Activated naive CD4-positive, alpha-beta T cell treated with anti-CD3 and anti-CD28 coated beads for 36 hours (primary cell): ENCODE measurements at regions of chr17 and their contacts with region 1.

Region 1: DNA sequence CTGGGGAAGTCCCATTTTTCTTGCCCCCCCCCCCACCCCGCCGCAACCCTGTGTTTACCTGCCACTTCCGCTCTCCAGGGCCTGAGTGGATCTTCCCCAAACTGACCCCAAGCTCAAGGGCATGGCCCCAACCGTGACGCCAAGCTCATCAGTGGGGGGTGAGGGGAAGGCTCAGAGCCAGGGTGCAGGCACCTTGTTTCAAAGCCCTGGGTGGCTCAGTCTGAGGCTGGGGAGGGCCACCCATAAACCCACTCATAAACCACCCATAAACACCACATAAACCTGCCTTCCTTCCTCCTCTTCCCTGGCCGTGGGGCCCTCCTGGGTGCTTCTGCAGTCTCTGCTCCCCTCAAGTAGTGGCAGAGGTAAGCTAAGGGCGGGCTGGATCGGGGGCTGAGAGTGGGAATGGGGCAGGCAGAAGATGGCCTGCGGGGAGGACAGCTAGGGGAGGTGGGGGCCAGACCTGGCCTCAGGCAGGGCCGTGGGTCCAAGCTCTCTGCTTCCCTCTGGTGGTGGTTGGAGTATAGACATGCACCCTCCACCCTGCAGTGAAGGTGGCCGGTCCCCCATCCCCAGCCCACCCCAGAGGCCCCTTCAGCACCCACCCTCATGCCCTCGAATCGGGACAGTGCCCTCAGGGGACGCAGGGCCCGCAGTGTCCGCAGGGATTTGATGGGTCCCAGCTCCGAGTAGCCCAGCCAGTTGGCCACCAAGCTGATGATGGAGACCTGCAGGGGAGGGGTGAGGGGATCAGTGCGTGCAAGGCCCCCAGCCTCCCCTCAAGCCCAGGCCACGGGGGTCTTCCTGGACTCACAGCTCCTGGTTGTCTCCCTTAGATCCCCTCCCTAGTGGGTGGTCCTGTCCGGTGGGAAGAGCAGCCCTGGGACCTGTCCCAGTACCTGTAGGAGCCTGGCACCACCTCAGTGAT is 14.6 kb upstream of the CD79B start:
- DNase-seq: peak; percentile 74
- H3K4me3 Mint-ChIP-seq: peak overlapping the region; percentile 28
- H3K27ac Mint-ChIP-seq: no peak overlapping the region
- H3K4me1 Mint-ChIP-seq: peaks cover 8% of the 10 kb centered on the region
- H3K27me3 Mint-ChIP-seq: no peaks in the 10 kb centered on the region

Region 2: DNA sequence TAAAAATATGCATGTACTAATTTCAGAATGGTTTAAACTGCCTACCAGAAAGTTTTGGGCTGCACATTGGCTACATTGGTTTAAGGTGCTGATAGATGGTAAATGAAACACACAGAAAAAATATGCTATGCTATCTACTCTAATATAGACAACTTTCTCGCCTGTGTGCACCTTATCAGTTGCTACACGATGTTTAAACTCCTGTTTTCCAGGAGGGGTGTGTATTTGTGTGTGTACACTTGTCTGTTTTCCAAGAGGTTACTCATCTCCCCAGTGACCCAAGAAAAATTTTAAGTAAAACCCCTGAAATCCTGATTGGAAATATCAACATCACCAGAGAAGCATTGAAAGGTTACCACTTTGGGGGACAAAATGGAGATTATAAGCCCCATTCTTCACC is 141.1 kb before region 1 on chr17:
- CTCF ChIA-PET with region 1: no interaction called
- intact Hi-C with region 1: no loop called
- DNase-seq: no peak
- H3K4me3 Mint-ChIP-seq: no peak overlapping the region
- H3K27ac Mint-ChIP-seq: peak overlapping the region; percentile 2
- H3K4me1 Mint-ChIP-seq: peaks cover 7% of the 10 kb centered on the region
- H3K27me3 Mint-ChIP-seq: no peaks in the 10 kb centered on the region

Region 3: DNA sequence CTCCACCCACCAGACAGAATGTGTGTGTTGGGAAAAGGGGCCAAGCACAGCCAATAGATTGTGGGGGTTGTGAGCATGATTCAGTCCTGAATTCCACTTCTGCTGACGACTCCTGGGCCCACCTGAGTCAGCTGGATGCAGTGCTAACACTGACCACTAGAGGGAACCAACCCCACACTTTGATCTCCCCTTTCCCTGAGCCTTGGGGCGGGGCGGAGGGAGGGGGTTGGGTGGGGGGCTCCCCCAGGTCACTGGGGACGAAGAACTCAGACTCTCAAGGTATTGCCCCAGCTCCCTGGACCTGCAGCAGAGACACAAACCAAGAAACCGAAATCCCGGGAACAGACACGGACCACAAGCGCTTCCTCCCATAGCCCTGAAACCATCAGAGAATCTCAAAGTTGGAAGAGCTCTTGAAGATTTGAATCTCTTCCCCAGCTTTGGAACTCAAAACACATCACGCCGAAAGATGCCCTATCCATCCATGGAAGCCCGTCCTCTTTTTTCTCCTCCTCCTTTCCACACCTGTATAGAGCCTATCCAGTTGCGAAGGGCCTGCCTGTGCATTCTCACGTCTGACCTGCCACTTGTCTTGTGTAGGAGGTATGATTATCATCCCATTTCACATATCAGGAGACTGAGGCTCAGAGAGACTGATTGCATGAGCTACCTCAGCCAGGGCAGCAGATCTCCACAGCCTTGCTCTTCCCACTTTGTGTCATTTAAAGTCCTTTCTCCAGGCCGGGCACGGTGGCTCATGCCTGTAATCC is 34.9 kb before region 1 on chr17:
- CTCF ChIA-PET with region 1: interaction called, 42 read pairs
- intact Hi-C with region 1: no loop called
- DNase-seq: peak; percentile 74
- H3K4me3 Mint-ChIP-seq: no peak overlapping the region
- H3K27ac Mint-ChIP-seq: no peak overlapping the region
- H3K4me1 Mint-ChIP-seq: no peaks in the 10 kb centered on the region
- H3K27me3 Mint-ChIP-seq: no peaks in the 10 kb centered on the region

Region 4: DNA sequence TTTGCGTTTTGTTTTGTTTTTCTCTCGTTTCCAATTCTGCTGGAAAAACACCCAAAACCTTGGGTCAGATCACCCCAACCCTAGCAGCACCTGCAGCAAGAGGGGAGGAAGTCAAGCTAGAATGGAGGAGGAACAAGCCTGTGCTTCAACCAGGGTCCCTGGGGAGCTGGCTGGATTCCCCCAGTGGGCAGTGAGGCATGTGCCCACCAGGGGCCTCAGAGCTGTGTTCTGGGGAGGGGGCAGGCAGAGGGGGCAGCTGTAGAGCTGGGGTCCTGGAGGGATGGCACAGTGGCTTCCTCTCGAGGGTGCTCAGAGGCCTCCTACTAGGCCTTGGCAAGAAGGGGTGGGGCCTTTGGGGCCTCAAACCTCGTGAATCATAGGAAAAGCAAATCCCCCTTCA is 21.1 kb before region 1 on chr17:
- CTCF ChIA-PET with region 1: interaction called, 76 read pairs
- intact Hi-C with region 1: no loop called
- DNase-seq: no peak
- H3K4me3 Mint-ChIP-seq: no peak overlapping the region
- H3K27ac Mint-ChIP-seq: no peak overlapping the region
- H3K4me1 Mint-ChIP-seq: peaks cover under 1% of the 10 kb centered on the region
- H3K27me3 Mint-ChIP-seq: no peaks in the 10 kb centered on the region

Region 5: GRCh38 chr17:63961355-63962212 is 14.9 kb after region 1 on chr17:
- CTCF ChIA-PET with region 1: interaction called, 39 read pairs
- intact Hi-C with region 1: no loop called
- DNase-seq: peak; percentile 59
- H3K4me3 Mint-ChIP-seq: peak overlapping the region; percentile 57
- H3K27ac Mint-ChIP-seq: no peak overlapping the region
- H3K4me1 Mint-ChIP-seq: peaks cover 4% of the 10 kb centered on the region
- H3K27me3 Mint-ChIP-seq: no peaks in the 10 kb centered on the region

Region 6: GRCh38 chr17:63984651-63985386 is 38.1 kb after region 1 on chr17:
- CTCF ChIA-PET with region 1: interaction called, 17 read pairs
- intact Hi-C with region 1: loop called (anchors 5 kb)
- DNase-seq: peak; percentile 82
- H3K4me3 Mint-ChIP-seq: no peak overlapping the region
- H3K27ac Mint-ChIP-seq: peak overlapping the region; percentile 56
- H3K4me1 Mint-ChIP-seq: peaks cover 13% of the 10 kb centered on the region
- H3K27me3 Mint-ChIP-seq: no peaks in the 10 kb centered on the region